HCT116 (cell line): ENCODE measurements at regions of chrX and their contacts with region 1.

Region 1: GRCh38 chrX:2643880-2644279 is 47.2 kb upstream of the CD99 start:
- DNase-seq: no peak
- ATAC-seq: no peak
- H3K4me3 ChIP-seq: no peak overlapping the region
- H3K27ac ChIP-seq: no peak overlapping the region
- H3K4me1 ChIP-seq: no peaks in the 10 kb centered on the region
- H3K27me3 ChIP-seq: no peaks in the 10 kb centered on the region
- CTCF ChIP-seq: no peak
- POLR2A ChIP-seq: no peak
- RAD21 ChIP-seq: no peak

Region 2: GRCh38 chrX:2192584-2193272 is 451.2 kb before region 1 on chrX:
- CTCF ChIA-PET with region 1: no interaction called
- POLR2A ChIA-PET with region 1: no interaction called
- RAD21 ChIA-PET with region 1: no interaction called
- intact Hi-C with region 1: no loop called
- DNase-seq: no peak
- ATAC-seq: no peak
- H3K4me3 ChIP-seq: no peak overlapping the region
- H3K27ac ChIP-seq: no peak overlapping the region
- H3K4me1 ChIP-seq: peaks cover 12 to 14% of the 10 kb centered on the region in 2 experiments
- H3K27me3 ChIP-seq: no peaks in the 10 kb centered on the region
- CTCF ChIP-seq: no peak
- POLR2A ChIP-seq: no peak
- RAD21 ChIP-seq: no peak

Region 3: DNA sequence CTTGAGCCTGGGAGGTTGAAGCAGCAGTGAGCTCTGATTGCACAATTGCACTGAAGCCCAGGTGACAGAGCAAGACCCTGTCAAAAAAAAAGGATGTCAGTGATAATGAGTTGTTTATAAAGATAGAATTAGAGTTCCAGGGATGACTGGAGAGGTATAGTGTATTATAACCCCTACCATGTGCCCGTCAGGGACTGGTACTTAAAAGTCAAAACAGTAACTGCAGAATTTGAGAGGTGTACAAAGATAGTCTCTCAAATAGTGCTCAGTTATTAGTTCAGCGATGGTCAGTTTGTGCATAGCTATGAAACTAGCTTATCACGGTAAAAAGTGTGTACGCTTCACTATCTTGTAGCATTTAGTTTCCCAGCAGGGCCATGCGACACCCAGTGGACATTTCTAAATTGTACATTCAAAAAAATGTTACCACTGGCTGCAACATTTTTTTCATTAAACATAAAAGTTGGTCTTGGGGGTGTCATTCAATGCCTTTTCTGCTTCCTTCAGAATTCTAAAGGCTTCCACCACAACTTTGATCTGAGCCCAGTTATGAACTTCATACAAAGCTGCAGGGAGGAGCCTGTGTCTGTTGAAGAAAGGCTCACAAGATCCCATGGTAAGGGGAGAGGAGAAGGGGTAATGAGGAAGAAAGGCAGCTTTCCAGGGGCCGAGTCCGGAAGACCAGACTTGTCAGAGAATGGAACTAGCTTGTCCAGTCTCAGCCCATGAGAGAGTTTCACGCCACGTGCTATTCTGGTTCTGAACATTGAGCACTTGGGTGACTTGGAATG is 175.7 kb after region 1 on chrX:
- CTCF ChIA-PET with region 1: no interaction called
- POLR2A ChIA-PET with region 1: no interaction called
- RAD21 ChIA-PET with region 1: no interaction called
- intact Hi-C with region 1: loop called (anchors 1 kb)
- DNase-seq: no peak
- ATAC-seq: peak; percentile 75
- H3K4me3 ChIP-seq: peak overlapping the region; percentile 9 to 28; a peak in 1 of 4 replicates
- H3K27ac ChIP-seq: no peak overlapping the region
- H3K4me1 ChIP-seq: peaks cover 0 to 4% of the 10 kb centered on the region in 2 experiments; a peak in 1 of 4 replicates
- H3K27me3 ChIP-seq: no peaks in the 10 kb centered on the region
- CTCF ChIP-seq: peak; percentile 34 to 46 (median 39); a peak in 4 of 6 replicates
- POLR2A ChIP-seq: no peak
- RAD21 ChIP-seq: peak; percentile 71